Cardiac septum (tissue), 1 donor: ENCODE measurements at regions of chr10 and their contacts with region 1.

Region 1: DNA sequence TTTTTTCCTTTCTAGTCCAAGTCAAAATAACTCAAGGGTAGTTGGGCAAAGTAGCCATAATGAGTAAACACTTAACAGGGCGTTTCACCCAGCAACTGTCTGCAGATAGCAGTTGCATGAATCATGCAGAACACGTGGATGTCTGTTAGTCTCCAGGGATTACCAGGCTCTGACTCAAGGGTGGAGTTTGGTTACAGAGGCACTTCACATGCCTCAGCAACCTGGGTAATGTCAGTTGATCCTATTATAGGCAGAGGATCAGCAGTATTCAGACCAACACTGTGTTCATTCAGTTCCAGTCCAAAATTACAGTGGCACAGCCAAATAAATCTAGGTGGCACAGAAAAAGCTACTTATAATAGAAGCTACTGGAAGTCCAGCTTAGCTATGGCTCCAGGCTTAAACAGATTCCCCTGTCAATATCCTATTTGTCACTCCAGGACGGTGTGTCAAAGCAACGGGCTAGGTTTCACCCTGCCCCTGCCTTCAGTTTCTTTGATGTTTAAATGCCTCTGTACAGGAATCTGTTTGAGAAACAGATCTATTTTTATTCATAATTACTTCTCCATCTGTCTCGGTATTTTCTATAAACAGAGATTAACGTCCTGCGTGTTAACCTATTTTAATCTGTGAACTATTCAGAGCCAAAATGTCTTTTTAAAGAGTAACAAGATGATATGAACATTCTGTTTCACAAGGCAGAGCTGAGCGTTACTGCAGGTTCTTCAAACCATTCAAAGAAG is 162.7 kb upstream of the AKR1E2 start:
- DNase-seq: peak; percentile 79

Region 2: GRCh38 chr10:3911713-3912442 is 751.5 kb before region 1 on chr10:
- intact Hi-C with region 1: loop called (anchors 10 kb)
- DNase-seq: no peak

Region 3: DNA sequence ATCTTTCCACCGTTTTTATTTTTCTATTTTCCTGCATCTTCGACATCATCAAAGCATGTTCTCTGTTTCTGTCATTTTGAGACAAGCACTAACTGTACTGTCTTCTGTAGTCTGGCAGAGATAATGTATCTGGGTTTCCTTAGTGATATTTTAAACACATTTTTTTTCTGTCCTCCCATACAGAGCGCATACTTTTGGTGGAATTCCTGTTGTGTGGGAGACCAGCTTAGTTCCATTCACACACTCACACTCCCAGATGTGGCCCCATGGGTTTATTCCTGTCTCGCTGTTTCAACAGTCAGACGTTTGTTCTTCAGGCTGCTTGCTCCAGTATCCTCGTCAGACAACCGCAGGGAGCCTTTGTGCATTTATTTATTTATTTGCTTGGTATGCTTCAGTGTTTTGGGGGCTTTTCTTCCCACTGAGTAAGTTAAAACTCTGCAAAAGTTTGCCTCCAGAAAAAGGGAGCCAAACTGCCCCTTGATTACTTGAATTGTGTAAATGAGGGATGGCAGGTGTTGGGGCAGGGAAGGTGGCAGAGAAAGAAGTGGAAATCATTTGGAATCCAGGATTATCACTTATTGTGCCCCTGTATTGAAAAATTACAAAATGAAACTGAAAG is 421.5 kb before region 1 on chr10:
- intact Hi-C with region 1: loop called (anchors 2 kb)
- DNase-seq: no peak

Region 4: DNA sequence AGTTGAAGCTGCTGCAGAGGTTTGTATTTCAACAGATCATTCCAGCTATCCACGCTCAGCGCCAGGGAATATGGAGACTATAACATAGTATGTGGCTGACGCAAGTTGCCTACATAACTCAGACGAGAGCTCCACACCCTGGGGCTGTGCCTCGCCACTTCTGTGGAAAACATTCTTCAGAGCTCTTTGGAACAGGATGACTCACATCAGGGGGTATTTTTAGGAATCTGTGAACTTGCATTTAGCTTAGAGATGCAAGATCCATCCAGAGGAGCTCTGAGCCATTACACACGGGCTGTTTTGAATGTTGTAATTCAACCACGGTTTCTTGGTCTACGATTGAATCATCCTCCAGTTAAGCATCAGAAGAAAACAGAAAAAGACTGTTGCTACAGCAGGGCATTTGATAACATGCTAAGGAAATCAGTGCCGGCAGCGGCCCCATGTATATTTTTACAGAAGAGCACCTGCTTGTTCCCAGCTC is 318.8 kb before region 1 on chr10:
- intact Hi-C with region 1: loop called (anchors 5 kb)
- DNase-seq: peak; percentile 80

Region 5: DNA sequence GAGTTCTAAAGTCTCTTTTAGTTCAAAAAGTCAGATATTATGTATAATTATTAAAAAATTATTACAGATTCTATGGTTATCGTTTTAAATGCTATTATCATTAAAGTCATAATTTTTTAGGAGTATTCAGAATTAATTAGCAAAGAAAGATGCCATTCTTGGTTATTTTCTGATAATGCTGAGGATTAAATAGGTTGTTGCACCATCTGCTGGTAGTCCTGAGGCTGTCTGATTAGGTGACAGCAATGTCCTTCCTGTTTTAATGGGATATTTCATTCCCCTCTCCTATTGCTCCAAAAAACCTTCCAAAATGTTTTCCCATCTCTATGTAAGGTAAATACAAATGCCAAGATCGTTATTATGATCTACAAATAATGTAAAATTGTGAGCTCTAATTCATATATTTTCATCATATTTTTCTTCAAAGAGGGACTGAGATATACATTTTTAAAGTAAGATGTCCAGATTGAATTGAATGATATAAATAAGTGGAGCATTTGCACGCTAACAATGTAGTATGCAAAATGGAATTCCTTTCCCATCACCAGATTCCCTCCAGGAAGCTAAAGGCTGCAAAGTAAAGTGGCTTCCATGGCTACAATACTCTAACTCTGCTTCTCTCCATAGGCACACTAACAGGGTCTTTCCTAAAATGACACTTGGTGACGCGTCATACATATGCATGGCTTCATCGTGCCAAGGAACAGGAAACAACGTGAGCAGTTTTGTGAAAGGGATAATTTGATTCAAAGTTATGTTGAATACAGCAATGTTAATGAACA is 103.9 kb after region 1 on chr10:
- intact Hi-C with region 1: loop called (anchors 5 kb)
- DNase-seq: no peak